ENCODE measurements at regions of chr9 and their contacts with region 1.

Region 1: GRCh38 chr9:132250324-132251262 is 88.7 kb downstream of the NTNG2 start:
- DNase-seq: no peak
- ATAC-seq: peak in 1 of 2 donors; percentile 17
- H3K4me3 ChIP-seq: no peak overlapping the region
- H3K27ac ChIP-seq: no peak overlapping the region
- H3K4me1 ChIP-seq: no peaks in the 10 kb centered on the region
- H3K27me3 ChIP-seq: no peaks in the 10 kb centered on the region

Region 2: DNA sequence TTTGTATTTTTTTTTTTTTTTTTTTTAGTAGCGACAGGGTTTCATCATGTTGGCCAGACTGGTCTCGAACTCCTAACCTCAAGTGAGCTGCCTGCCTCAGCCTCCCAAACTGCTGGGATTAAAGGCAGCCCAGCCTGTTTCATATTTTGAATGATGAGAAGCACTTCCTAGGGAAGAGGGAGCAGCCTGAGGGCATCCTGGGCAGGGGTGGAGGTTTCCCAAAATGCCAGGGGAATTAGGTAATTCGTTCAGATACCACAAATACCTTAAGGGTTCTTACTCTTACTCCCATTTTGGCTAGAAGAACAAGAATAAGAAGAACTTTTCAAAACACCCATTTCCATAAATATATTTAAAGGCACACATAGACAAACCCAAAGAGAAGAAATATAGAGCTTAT is 481.2 kb before region 1 on chr9:
- intact Hi-C with region 1: loop called in 2 of 4 experiments (anchors 5 kb)
- DNase-seq: no peak
- ATAC-seq: no peak
- H3K4me3 ChIP-seq: no peak overlapping the region
- H3K27ac ChIP-seq: no peak overlapping the region
- H3K4me1 ChIP-seq: no peaks in the 10 kb centered on the region
- H3K27me3 ChIP-seq: no peaks in the 10 kb centered on the region

Measured in right cardiac atrium (tissue), 5 donors.